Left cardiac atrium (tissue), 4 donors: ENCODE measurements at regions of chr4 and their contacts with region 1.

Region 1: GRCh38 chr4:165464813-165465381 is 86.1 kb downstream of the CPE start:
- DNase-seq: no peak
- ATAC-seq: peak in 1 of 2 donors; percentile 46

Region 2: GRCh38 chr4:165131247-165131832 is 333.6 kb before region 1 on chr4:
- intact Hi-C with region 1: loop called (anchors 1 to 5 kb)
- DNase-seq: peak; percentile 40
- ATAC-seq: peak; percentile 80 to 82

Region 3: GRCh38 chr4:165301833-165302232 is 163.1 kb before region 1 on chr4:
- intact Hi-C with region 1: no loop called
- DNase-seq: no peak
- ATAC-seq: peak in 1 of 2 donors; percentile 24

Region 4: GRCh38 chr4:165355900-165356300 is 109.0 kb before region 1 on chr4:
- intact Hi-C with region 1: loop called (anchors 2 to 5 kb)
- DNase-seq: no peak
- ATAC-seq: peak; percentile 47 to 67

Region 5: DNA sequence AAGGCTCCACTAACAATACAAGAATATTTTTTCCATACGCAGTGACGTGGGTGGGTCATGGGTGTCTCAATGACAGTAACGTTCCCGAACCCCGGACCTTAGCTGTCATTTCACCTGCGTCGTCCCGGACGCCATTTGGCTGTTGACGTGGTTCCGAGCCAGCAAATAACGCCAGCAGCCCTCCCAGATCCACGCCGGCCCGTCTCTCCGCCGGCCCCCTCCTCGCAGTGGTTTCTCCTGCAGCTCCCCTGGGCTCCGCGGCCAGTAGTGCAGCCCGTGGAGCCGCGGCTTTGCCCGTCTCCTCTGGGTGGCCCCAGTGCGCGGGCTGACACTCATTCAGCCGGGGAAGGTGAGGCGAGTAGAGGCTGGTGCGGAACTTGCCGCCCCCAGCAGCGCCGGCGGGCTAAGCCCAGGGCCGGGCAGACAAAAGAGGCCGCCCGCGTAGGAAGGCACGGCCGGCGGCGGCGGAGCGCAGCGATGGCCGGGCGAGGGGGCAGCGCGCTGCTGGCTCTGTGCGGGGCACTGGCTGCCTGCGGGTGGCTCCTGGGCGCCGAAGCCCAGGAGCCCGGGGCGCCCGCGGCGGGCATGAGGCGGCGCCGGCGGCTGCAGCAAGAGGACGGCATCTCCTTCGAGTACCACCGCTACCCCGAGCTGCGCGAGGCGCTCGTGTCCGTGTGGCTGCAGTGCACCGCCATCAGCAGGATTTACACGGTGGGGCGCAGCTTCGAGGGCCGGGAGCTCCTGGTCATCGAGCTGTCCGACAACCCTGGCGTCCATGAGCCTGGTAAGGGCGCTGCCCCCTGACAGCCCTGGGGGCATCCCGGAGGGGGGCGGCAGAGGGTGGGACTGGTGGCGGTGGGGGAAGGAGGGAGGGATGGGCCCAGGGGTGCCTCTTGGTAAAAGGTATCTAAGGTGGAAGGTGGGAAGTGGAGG is 85.9 kb before region 1 on chr4 and contains the start of gene CPE:
- intact Hi-C with region 1: loop called in 1 of 2 experiments (anchors 5 kb)
- DNase-seq: peak; percentile 81
- ATAC-seq: peak; percentile 98 to 99
- total RNA-seq, gene CPE: 84.8 to 92.5 TPM